MCF 10A (cell line): ENCODE measurements at regions of chr10 and their contacts with region 1.

Region 1: DNA sequence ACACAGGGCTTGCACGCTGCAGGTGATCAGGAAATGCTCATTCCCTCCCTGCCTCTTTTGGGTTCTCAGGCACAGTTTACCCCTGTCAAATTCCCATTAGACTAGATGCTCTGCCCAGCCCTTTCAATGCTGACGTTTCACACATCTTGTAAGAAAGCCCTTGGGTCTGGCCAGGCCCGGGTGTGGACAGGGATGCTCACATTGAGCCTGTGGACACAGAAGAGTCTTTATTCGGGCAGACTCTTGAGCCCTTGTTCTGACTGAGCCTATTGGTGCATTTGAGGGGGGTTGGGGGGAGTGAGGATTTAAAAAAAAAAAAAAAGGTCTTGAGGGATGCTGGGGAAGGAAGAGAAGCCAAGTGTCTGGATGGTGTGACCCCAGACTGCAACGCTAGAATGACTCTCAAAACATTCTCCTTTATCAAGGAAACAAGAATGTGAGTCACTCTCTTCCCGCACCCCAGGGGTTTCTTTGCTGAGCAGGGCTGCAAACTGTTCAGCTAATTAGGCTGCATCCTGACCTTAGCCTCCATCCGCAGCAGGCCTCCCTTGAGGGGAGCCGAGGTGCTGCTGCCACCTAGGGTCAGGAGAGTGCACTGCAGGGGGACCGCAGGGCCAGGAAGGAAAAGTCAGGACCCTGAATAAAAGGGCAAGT is 53.6 kb upstream of the TMEM72 start:
- DNase-seq: peak; percentile 69
- H3K4me3 Mint-ChIP-seq: no peak overlapping the region
- H3K27ac Mint-ChIP-seq: no peak overlapping the region
- H3K4me1 Mint-ChIP-seq: no peaks in the 10 kb centered on the region
- H3K27me3 Mint-ChIP-seq: no peaks in the 10 kb centered on the region
- CTCF ChIP-seq: peak; percentile 96

Region 2: DNA sequence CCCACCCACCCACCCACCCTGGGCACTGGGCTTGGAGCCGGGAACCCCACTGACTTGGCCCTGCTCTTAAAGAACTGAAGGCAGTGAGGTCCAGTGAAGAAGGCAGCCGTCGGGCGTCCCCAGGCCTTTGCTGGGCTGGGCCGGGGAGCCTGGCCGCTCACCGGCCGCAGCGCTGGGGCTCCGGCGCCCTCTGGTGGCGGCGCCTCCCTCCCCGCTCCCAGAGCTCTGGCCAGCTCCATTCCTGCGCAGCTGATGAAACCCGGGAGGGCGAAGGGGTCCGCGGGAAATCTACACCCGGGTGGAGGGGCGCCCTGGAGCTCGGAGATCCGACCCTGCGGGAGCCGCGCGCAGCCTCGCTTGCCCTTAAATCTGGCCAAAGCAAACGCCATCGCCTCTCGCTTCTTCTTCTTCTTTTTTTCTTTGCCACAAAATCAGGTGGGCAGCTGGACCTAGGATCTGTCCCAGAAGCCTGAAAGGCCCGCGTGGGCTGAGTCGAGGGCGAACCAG is 470.9 kb before region 1 on chr10:
- CTCF ChIA-PET with region 1: interaction called, 3 read pairs
- POLR2A ChIA-PET with region 1: no interaction called
- intact Hi-C with region 1: loop called (anchors 5 kb)
- DNase-seq: peak; percentile 46
- H3K4me3 Mint-ChIP-seq: no peak overlapping the region
- H3K27ac Mint-ChIP-seq: no peak overlapping the region
- H3K4me1 Mint-ChIP-seq: no peaks in the 10 kb centered on the region
- H3K27me3 Mint-ChIP-seq: peaks cover 4% of the 10 kb centered on the region
- CTCF ChIP-seq: peak; percentile 84